SK-N-SH (cell line): ENCODE measurements at regions of chr7 and their contacts with region 1.

Region 1: DNA sequence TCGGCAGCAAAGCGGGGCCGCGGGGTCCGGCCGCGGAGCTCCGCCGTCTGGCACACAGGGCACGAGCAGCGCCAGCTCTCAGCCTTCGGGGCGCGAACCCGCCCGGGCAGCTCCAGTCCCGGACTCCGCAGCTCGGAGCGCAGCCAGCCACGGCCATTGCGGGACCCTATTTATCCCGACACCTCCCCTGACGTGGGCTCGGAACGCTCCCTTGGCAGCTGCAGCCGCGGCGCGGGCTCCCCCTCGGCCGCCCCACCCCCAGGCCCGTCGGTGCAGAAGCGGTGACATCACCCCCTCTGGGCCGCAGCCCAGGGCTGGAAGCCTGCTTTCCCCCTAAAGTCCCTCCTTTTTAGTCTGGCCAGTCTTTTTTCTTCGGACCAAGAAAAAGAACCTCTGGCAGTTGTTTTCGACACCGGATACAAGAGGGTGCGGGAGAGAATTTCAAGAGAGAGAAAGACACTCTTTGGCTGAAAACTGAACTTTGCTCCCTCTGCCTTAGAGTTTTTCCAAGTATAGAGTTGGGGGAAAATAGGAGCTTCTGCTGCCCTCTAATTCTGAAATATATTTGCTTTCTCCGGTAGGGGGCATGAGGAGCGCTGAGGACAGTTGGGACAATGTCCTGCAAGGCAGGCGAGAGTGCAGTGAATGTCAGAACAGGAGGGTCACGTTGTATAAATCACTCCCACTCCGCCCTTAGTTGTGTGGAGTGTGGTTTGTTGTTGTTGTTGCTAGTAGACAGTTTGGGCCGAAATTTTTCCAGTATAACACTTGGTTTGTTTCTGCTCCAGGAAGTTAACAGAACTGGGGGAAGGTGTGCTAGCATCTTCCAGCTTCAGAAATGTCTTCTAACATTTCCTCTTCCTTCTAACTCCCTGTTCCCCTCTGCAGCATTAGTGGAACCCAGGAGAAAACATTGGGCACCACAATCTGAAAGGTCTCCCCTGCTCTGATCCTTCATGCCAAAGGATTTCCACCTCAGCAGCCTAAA is at the start of gene SFRP4:
- DNase-seq: peak; percentile 77
- H3K4me3 ChIP-seq: peak within 1 kb of the TSS; percentile 51 to 54
- H3K27ac ChIP-seq: no peak within 1 kb of the TSS
- H3K4me1 ChIP-seq: peaks cover 0 to 26% of the 10 kb centered on the region in 2 experiments; a peak in 2 of 4 replicates
- H3K27me3 ChIP-seq: peaks cover 39% of the 10 kb centered on the region; the same call in 1 of the 2 replicates
- CTCF ChIP-seq: peak; percentile 82
- EP300 ChIP-seq: no peak
- RAD21 ChIP-seq: peak; percentile 69
- polyA plus RNA-seq, gene SFRP4: 0.03 TPM in 1 of 2 replicates, not detected in the other

Region 2: GRCh38 chr7:37882086-37882485 is 34.9 kb before region 1 on chr7:
- CTCF ChIA-PET with region 1: interaction called, 15 read pairs
- POLR2A ChIA-PET with region 1: interaction called, 3 read pairs
- DNase-seq: no peak
- H3K4me3 ChIP-seq: no peak overlapping the region
- H3K27ac ChIP-seq: no peak overlapping the region
- H3K4me1 ChIP-seq: no peaks in the 10 kb centered on the region
- H3K27me3 ChIP-seq: no peaks in the 10 kb centered on the region
- CTCF ChIP-seq: no peak
- EP300 ChIP-seq: no peak
- RAD21 ChIP-seq: no peak

Region 3: DNA sequence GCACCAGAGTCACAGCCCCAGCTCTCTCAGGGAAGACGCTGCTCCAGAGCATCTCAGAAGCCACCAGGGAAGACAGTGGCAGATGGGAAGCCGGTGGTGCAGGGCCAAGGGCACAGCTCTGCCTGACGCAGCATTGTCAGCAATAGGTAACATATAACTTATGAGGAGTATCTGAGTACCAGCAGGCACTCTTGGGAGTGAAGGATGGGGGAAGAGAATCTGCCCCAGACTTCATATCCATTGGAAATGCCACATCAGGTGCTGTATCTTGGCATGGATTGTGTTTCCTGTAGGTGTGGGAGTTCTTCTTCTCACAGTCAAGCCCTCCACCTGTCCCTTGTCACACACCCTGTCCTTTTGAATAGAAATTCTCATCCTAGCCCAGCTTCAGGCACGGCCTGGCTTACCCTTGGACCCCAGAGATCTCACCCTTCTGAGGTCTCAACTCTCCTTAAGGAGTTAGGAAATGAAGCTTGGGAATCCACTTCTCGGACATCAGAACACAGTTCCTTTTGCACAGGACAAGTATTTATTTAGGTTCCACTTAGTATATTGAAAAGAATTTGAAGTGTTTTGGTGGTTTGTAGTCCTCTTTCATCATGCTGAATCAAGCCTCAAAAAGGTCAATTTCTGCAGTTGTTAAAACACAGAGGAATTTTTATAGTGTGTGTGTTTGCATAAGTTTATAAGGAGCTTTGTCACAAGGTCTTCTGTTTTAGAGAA is 13.4 kb after region 1 on chr7:
- CTCF ChIA-PET with region 1: interaction called, 29 read pairs
- POLR2A ChIA-PET with region 1: no interaction called
- DNase-seq: no peak
- H3K4me3 ChIP-seq: no peak overlapping the region
- H3K27ac ChIP-seq: no peak overlapping the region
- H3K4me1 ChIP-seq: no peaks in the 10 kb centered on the region
- H3K27me3 ChIP-seq: no peaks in the 10 kb centered on the region
- CTCF ChIP-seq: no peak
- EP300 ChIP-seq: no peak
- RAD21 ChIP-seq: no peak

Region 4: GRCh38 chr7:38040831-38041230 is 123.9 kb after region 1 on chr7:
- CTCF ChIA-PET with region 1: interaction called, 19 read pairs
- POLR2A ChIA-PET with region 1: no interaction called
- DNase-seq: peak; percentile 57
- H3K4me3 ChIP-seq: no peak overlapping the region
- H3K27ac ChIP-seq: peak overlapping the region in 1 of 2 experiments; percentile 30; a peak in 2 of 4 replicates
- H3K4me1 ChIP-seq: peaks cover 0 to 7% of the 10 kb centered on the region in 2 experiments; a peak in 2 of 4 replicates
- H3K27me3 ChIP-seq: no peaks in the 10 kb centered on the region
- CTCF ChIP-seq: no peak
- EP300 ChIP-seq: no peak
- RAD21 ChIP-seq: no peak

Region 5: DNA sequence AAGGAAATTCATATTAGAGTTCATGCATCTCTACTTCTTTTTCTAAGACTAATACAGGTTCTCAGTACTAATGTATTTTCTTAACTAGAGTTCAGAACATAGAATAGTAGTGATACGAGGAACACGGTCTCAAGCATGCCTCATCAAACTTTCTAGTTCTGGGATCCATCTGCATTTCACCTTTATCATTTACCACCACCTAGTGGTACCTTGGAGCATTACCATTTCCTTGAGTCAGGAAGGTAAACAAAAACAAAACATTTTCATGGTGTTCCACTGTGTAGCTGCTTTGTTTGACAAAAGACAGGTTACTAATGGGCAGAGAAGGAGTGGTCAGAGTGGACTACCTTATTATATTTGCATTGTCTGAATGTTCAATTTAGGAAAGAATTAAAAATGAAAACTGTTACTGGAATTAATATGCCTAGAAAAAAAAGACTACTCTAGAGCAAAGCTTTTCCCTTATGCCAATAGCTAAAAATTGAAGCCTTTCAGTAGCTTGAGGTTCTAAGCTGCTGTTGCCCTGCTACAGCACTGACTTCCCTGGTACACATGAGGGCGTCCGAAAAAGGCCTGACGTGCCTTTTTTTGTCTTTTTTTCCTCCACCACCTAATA is 305.6 kb after region 1 on chr7:
- CTCF ChIA-PET with region 1: interaction called, 42 read pairs
- POLR2A ChIA-PET with region 1: no interaction called
- DNase-seq: peak; percentile 50
- H3K4me3 ChIP-seq: no peak overlapping the region; a peak in 1 of 4 replicates
- H3K27ac ChIP-seq: no peak overlapping the region
- H3K4me1 ChIP-seq: no peaks in the 10 kb centered on the region
- H3K27me3 ChIP-seq: no peaks in the 10 kb centered on the region
- CTCF ChIP-seq: peak; percentile 98
- EP300 ChIP-seq: no peak
- RAD21 ChIP-seq: peak; percentile 93